Ascending aorta (tissue), 2 donors: ENCODE measurements at regions of chr14 and their contacts with region 1.

Region 1: DNA sequence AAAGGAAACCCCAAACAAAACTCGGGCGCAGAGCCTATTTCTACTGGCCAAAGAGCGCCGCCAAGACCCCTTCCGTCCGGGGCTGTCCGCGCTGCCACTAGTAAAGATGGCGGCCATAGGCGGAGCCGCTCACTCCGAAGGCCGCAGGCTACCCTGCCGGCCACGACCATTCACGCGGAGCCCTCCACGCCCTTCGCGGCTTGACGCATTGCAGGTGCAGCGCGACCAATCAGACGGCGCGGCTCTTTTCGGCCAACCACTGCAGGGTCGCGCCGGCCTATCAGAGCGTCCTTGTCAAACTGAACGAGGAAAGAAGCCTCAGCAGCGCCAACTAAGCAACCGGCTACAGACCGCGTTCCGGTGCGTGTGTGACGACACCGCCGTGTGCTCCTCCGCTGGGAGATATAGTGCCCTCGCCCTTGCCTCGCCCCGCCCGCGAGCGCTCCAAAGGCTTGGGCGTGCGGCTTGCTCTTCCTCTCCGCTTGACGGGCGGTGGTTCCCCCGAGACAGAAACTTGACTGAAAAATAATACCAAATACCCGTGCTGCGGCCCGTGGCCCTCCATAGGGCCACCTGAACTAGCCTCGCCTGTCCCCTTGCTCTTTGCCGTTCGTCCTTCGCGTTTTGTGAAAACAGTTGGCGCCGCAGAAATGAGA is 13.6 kb upstream of the CALM1 start:
- DNase-seq: peak; percentile 97 to 100
- H3K4me3 ChIP-seq: peak overlapping the region; percentile 72 to 75
- H3K27ac ChIP-seq: peak overlapping the region; percentile 100
- H3K4me1 ChIP-seq: peaks cover 0 to 16% of the 10 kb centered on the region in 2 donors
- H3K27me3 ChIP-seq: no peaks in the 10 kb centered on the region
- CTCF ChIP-seq: peak in 1 of 3 experiments; percentile 9

Region 2: DNA sequence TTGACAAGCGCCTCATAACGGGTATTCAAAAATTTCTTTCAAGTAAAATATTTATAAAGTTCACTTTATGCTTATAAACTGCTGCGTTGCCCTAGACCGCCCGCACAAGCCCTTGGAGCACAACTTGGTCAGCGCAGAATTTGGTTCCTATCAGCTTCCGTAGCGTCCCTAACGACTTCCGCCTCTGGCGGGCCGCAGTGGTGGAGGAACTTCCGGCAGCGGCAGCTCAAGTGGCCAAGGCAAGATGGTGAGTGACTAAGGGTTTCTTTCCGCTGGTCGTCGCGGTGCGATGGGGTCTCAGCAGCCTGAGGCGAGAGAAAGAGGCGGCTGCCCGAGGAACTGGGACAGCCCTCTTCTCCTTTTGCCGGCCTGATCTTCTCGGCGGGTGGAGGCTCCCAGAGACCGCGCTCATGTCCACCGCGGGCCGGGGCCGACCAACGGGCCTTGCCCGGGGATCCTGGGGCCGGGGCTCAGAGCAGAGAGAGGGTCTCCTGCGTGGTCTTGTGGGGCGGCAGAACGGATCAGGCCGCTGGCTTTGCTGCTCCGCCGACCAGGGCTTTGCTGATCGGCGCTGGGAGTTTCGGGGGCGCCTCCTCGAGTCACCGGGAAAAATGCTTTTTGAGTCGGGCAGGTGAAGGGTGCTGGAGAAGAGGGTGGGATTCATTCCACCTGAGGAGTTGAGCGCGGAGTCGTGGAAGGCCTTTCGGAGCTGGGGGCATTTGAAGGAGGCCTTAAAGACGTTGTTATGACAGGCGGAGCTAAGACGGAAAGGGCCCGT is 126.7 kb before region 1 on chr14 and contains the start of gene PSMC1:
- intact Hi-C with region 1: loop called (anchors 2 kb)
- DNase-seq: peak; percentile 63 to 95
- H3K4me3 ChIP-seq: peak within 1 kb of the TSS; percentile 92 to 99
- H3K27ac ChIP-seq: peak within 1 kb of the TSS; percentile 90 to 93
- H3K4me1 ChIP-seq: peaks cover 0 to 4% of the 10 kb centered on the region in 2 donors
- H3K27me3 ChIP-seq: no peaks in the 10 kb centered on the region
- CTCF ChIP-seq: peak in 1 of 3 experiments; percentile 2
- total RNA-seq, gene PSMC1: 93.2 TPM

Region 3: GRCh38 chr14:90276646-90277367 is 106.4 kb before region 1 on chr14:
- intact Hi-C with region 1: no loop called
- DNase-seq: no peak
- H3K4me3 ChIP-seq: no peak overlapping the region
- H3K27ac ChIP-seq: peak overlapping the region in 1 of 2 donors; percentile 37
- H3K4me1 ChIP-seq: peaks cover 0 to 7% of the 10 kb centered on the region in 2 donors
- H3K27me3 ChIP-seq: no peaks in the 10 kb centered on the region
- CTCF ChIP-seq: no peak

Region 4: GRCh38 chr14:90331497-90332435 is 51.4 kb before region 1 on chr14 and contains the start of gene NRDE2:
- intact Hi-C with region 1: loop called (anchors 1 kb)
- DNase-seq: peak; percentile 91 to 99
- H3K4me3 ChIP-seq: peak within 1 kb of the TSS; percentile 70 to 81
- H3K27ac ChIP-seq: peak within 1 kb of the TSS; percentile 82 to 83
- H3K4me1 ChIP-seq: peaks cover 0 to 3% of the 10 kb centered on the region in 2 donors
- H3K27me3 ChIP-seq: no peaks in the 10 kb centered on the region
- CTCF ChIP-seq: no peak
- total RNA-seq, gene NRDE2: 9.2 TPM

Region 5: DNA sequence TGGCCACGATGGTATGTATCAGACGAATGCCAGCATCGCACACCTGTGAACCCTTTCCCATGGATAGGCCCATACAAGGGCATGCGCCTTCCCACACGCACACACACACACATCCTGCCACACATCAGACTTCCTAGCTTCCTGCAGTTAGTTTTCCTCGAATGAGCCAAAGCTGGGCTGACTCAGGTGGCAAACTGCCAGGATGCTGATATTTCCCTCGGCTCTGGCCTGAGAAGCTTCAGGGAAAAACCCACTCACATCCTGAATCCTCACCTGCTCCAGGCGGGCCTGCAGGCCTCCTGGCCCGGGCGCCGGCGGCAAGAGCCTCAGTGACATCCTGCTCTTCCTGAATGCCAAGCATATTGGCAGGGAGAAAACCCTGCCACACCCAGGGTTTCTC is 36.0 kb after region 1 on chr14:
- intact Hi-C with region 1: no loop called
- DNase-seq: peak; percentile 68 to 96
- H3K4me3 ChIP-seq: no peak overlapping the region
- H3K27ac ChIP-seq: peak overlapping the region; percentile 52 to 79
- H3K4me1 ChIP-seq: peaks cover 0 to 13% of the 10 kb centered on the region in 2 donors
- H3K27me3 ChIP-seq: no peaks in the 10 kb centered on the region
- CTCF ChIP-seq: no peak

Region 6: DNA sequence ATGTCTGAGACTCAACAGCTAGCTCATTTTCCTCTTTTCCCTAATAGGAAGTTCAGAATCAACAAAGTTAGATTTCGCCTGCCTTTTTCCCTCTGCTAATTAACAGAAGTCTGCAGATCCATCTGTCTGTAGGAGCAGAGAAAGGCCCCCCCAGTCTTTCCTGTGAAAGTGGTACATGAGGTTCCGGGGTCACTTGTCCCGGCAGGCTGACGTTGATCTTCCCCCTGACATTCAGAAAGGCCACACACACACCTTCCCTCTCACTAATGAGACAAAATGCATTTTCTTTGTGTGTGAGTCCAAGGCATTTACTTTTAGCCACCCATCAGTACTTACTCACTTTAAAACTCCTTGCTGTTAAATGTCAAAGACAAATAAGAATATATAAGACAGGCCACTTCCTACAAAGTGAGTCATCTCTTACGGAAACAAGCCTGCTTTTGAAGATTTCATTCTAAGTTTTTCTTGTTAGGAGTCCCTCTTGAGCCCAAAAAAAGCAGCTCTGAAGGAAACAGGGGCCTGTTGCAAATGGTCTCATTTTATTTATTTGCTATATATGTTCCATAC is 294.4 kb after region 1 on chr14:
- intact Hi-C with region 1: loop called (anchors 5 kb)
- DNase-seq: no peak
- H3K4me3 ChIP-seq: no peak overlapping the region
- H3K27ac ChIP-seq: peak overlapping the region; percentile 77 to 92
- H3K4me1 ChIP-seq: peaks cover 8 to 20% of the 10 kb centered on the region in 2 donors
- H3K27me3 ChIP-seq: no peaks in the 10 kb centered on the region
- CTCF ChIP-seq: no peak

Region 7: DNA sequence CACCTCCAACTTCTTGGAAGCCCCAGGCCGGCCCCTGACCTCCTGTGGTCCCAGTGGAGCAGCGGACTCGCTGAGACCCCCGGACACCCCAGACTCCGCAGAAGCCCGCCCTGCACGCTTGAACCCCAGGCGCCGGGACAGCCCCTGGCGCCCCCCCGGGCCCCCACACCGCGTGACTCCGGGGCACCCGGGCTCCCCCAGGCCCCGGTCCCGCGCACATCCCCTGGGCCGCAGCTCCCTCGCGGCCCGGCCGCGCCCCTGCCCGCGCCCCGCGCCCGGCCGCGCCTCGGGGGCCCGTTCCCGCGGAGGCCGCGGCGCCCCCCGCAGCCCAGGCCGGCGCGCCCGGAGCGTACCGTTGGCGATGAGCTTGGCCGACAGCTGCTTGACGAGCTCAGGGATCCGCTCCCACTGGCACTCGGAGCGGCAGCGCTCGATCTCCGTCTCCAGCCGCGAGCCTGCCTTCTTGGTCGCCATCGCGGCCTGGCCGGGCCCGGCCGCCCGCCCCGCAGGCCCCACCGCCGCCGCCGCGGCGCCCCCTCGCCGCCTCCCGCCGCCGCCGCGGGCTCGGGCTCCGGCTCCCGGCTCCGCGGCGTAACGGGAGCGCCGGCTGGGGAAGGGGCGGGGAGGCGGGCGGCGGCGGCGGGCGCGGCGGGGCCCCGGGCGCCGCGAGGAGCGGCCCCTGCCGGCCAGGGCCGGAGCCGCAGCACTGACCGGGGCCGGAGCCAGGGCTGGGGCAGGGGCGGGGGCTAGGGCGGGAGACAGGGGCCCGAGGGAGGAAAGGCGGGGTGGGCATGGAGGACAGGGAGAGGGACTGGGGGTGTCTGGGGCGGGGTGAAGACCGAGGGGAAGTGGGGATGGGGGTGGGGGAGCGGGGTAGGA is 432.9 kb after region 1 on chr14 and contains the start of gene TTC7B:
- intact Hi-C with region 1: loop called (anchors 5 kb)
- DNase-seq: no peak
- H3K4me3 ChIP-seq: peak within 1 kb of the TSS; percentile 93
- H3K27ac ChIP-seq: no peak within 1 kb of the TSS
- H3K4me1 ChIP-seq: peaks cover 0 to 6% of the 10 kb centered on the region in 2 donors
- H3K27me3 ChIP-seq: no peaks in the 10 kb centered on the region
- CTCF ChIP-seq: peak; percentile 24 to 45 (median 26)
- total RNA-seq, gene TTC7B: 18.5 TPM

Region 8: GRCh38 chr14:91060351-91061055 is 677.3 kb after region 1 on chr14 and contains the start of gene RPS6KA5:
- intact Hi-C with region 1: loop called (anchors 10 kb)
- DNase-seq: peak; percentile 100
- H3K4me3 ChIP-seq: peak within 1 kb of the TSS; percentile 91 to 98
- H3K27ac ChIP-seq: peak within 1 kb of the TSS; percentile 94 to 99
- H3K4me1 ChIP-seq: peaks cover 3 to 9% of the 10 kb centered on the region in 2 donors
- H3K27me3 ChIP-seq: no peaks in the 10 kb centered on the region
- CTCF ChIP-seq: peak in 2 of 3 experiments; percentile 16 to 59
- total RNA-seq, gene RPS6KA5: 0.21 TPM